ENCODE measurements at regions of chr18 and their contacts with region 1.

Region 1: DNA sequence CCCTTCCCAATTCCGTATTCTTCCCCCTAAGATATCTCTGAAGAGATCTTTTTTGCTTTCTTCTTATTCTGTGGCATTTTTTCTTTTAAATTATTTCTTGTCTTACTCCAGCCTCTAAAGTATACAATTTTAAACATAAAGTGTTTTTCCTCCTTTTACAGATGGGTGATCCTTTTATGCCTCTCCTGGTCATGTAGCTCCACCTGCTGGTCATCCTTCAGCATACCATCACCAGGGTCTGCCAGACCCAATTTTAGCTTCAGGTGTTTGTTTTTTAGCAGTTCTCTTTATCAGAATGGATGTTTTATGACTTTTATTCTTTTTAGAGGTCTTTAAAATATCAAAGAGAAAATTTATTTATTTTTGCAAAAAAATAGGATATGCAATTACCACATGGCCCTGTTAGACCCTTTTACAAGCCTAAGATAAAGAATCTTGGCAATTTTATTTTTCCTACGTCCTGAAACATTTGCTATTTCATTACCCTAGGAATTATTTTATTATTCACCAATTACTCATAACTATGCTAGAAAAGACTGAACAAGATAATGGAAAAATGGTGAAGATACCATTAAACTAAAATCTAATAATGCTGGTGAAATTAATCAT is 55.5 kb downstream of the PIGN start:
- DNase-seq: peak; percentile 35 to 64 (median 42)
- H3K4me3 ChIP-seq: no peak overlapping the region
- H3K27ac ChIP-seq: no peak overlapping the region
- H3K4me1 ChIP-seq: no peaks in the 10 kb centered on the region
- H3K27me3 ChIP-seq: no peaks in the 10 kb centered on the region
- CTCF ChIP-seq: peak; percentile 55 to 88 (median 83)
- EP300 ChIP-seq: no peak
- POLR2A ChIP-seq: no peak

Region 2: GRCh38 chr18:61581578-61582201 is 549.7 kb before region 1 on chr18:
- intact Hi-C with region 1: loop called in 1 of 4 experiments (anchors 5 kb)
- DNase-seq: peak; percentile 65 to 88 (median 80)
- H3K4me3 ChIP-seq: peak overlapping the region; percentile 42
- H3K27ac ChIP-seq: peak overlapping the region; percentile 5 to 57
- H3K4me1 ChIP-seq: peaks cover 2% of the 10 kb centered on the region
- H3K27me3 ChIP-seq: no peaks in the 10 kb centered on the region
- CTCF ChIP-seq: peak; percentile 81 to 99 (median 91)
- EP300 ChIP-seq: no peak
- POLR2A ChIP-seq: no peak

Region 3: DNA sequence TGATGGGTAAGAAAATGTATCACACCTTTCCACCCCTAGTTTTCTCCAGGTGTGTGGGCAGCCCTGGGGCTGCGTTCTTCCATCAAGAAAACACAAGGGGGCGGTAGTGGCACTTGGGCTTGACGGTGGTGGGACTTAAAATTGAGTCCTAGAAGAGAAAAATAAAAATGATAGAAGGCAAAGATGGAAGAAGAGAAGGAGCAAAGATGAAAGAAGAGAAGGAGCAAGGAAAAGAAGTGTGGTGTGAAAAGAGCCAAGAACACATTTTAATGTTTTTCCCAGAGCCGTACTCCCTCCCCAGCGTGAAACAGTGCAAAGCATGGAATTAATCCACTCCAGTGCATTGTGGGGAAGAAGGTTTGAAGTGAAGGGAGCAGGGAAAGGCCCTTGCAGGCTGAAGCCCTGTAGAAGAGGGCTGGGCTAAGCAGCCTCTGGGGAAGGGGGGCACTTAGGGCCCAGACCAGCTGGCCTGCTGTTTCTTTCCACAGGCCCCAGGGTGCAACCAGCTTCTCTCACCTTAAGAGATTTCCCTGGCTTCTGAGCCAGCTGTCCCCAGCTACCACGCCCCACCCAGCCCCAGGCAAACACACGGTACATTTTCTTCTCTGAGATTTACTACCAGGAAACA is 495.4 kb before region 1 on chr18:
- intact Hi-C with region 1: loop called in 2 of 4 experiments (anchors 5 to 10 kb)
- DNase-seq: peak; percentile 17 to 53 (median 37)
- H3K4me3 ChIP-seq: no peak overlapping the region
- H3K27ac ChIP-seq: no peak overlapping the region
- H3K4me1 ChIP-seq: peaks cover 5% of the 10 kb centered on the region
- H3K27me3 ChIP-seq: no peaks in the 10 kb centered on the region
- CTCF ChIP-seq: peak; percentile 12 to 57 (median 36)
- EP300 ChIP-seq: no peak
- POLR2A ChIP-seq: no peak

Region 4: GRCh38 chr18:62069556-62069955 is 61.8 kb before region 1 on chr18:
- intact Hi-C with region 1: no loop called
- DNase-seq: no peak
- H3K4me3 ChIP-seq: no peak overlapping the region
- H3K27ac ChIP-seq: no peak overlapping the region
- H3K4me1 ChIP-seq: no peaks in the 10 kb centered on the region
- H3K27me3 ChIP-seq: no peaks in the 10 kb centered on the region
- CTCF ChIP-seq: no peak
- EP300 ChIP-seq: no peak
- POLR2A ChIP-seq: no peak

Measured in ovary (tissue), 10 donors.